Activated CD4-positive, alpha-beta T cell treated with anti-CD3 and anti-CD28 coated beads for 36 hours (primary cell): ENCODE measurements at regions of chr12 and their contacts with region 1.

Region 1: DNA sequence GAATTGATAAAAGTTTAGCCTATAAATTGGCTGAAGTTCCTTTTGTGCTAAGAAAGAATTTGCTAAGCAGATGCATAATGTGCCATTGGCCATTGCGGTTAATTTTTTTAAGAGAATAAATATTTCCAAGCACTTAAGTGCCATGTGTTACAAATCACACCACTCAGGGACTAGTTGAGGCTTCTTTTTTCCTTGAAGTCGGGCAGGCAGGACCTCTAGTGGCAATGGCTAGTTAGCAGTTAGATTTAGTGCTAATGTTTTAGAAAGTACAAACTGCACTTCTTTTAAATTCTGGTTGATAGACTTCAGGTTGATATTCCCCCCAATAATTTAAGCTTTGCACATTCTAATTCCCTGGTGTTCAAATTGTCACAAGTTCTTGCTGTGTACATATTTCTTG is 294.3 kb downstream of the APAF1 start:
- DNase-seq: peak; percentile 23
- ATAC-seq: no peak
- H3K4me3 Mint-ChIP-seq: no peak overlapping the region
- H3K27ac Mint-ChIP-seq: no peak overlapping the region
- H3K4me1 Mint-ChIP-seq: no peaks in the 10 kb centered on the region
- H3K27me3 Mint-ChIP-seq: peaks cover 12% of the 10 kb centered on the region

Region 2: GRCh38 chr12:98725476-98726247 is 213.7 kb before region 1 on chr12:
- CTCF ChIA-PET with region 1: no interaction called
- POLR2A ChIA-PET with region 1: no interaction called
- intact Hi-C with region 1: loop called in 1 of 2 experiments (anchors 1 kb)
- DNase-seq: peak; percentile 83
- ATAC-seq: peak; percentile 89
- H3K4me3 Mint-ChIP-seq: no peak overlapping the region
- H3K27ac Mint-ChIP-seq: no peak overlapping the region
- H3K4me1 Mint-ChIP-seq: peaks cover 11% of the 10 kb centered on the region
- H3K27me3 Mint-ChIP-seq: no peaks in the 10 kb centered on the region

Region 3: DNA sequence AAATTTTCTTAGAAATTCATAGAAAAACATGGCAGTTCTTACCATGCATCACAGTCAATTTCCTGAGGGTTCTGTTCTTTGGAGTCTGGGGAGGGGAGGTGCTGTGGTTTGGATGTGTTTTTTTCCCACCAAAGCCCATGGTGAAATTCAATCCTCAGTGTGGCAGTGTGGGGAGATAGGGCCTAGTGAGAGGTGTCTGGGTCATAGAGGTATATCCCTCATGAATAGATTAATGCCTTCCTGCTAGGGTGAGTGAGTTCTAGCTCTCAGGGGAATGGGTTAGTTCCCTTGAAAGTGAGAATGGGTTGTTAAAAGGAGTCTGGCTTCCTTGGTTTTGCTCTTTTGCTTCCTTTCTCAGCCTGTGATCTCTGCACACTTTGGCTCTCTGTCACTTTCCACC is 16.5 kb before region 1 on chr12:
- CTCF ChIA-PET with region 1: no interaction called
- POLR2A ChIA-PET with region 1: no interaction called
- intact Hi-C with region 1: no loop called
- DNase-seq: no peak
- ATAC-seq: no peak
- H3K4me3 Mint-ChIP-seq: no peak overlapping the region
- H3K27ac Mint-ChIP-seq: no peak overlapping the region
- H3K4me1 Mint-ChIP-seq: no peaks in the 10 kb centered on the region
- H3K27me3 Mint-ChIP-seq: peaks cover 9% of the 10 kb centered on the region

Region 4: GRCh38 chr12:99020871-99021270 is 81.5 kb after region 1 on chr12:
- CTCF ChIA-PET with region 1: no interaction called
- POLR2A ChIA-PET with region 1: no interaction called
- intact Hi-C with region 1: no loop called
- DNase-seq: no peak
- ATAC-seq: no peak
- H3K4me3 Mint-ChIP-seq: no peak overlapping the region
- H3K27ac Mint-ChIP-seq: no peak overlapping the region
- H3K4me1 Mint-ChIP-seq: no peaks in the 10 kb centered on the region
- H3K27me3 Mint-ChIP-seq: peaks cover 4% of the 10 kb centered on the region